GM12878 (cell line): ENCODE measurements at regions of chr7 and their contacts with region 1.

Region 1: DNA sequence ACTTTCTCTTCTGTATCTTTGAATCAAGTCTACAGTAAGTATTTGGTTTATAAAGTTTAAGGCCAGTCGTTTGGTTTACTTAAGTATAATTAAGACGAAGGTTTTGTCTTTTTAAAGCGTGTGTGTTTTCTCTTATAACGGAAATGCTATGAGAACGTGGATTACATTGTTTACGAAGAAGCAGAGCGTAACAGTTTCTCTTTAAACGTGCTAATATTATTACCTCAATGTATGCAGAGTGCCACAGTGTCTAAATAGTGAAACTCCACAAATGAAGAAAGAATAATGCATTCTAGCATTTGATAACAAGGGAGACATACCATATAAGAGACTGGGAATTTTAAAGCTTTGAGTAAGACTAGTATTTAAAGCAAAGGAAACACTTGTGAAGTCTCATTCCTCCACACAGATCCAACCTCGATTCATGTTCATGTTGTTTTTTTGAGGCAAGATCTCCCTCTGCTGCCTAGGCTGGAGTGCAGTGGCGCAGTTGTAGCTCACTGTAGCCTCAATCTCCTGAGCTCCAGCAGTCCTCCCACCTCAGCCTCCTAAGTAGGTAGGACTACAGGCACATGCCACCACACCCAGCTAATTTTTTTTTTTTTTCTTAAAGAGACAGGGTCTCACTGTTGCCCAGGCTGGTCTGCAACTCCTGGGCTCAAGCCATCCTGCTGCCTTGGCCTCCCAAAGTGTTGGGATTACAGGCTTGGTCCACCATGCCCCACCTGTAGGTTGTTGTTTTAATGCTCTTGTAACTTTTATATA is 75.1 kb downstream of the ANKRD61 start:
- DNase-seq: no peak
- ATAC-seq: peak; percentile 59
- H3K4me3 ChIP-seq: peak overlapping the region; percentile 93
- H3K27ac ChIP-seq: peak overlapping the region; percentile 66
- H3K4me1 ChIP-seq: 0 out of 2 replicates have a peak, but pooled peaks cover 3% of the 10 kb centered on the region
- H3K27me3 ChIP-seq: no peaks in the 10 kb centered on the region
- CTCF ChIP-seq: peak; percentile 21 to 51 (median 31); a peak in 4 of 6 replicates
- EP300 ChIP-seq: no peak
- POLR2A ChIP-seq: no peak
- RAD21 ChIP-seq: peak; percentile 32; the same call in 1 of the 2 replicates

Region 2: GRCh38 chr7:5854738-5855137 is 251.6 kb before region 1 on chr7:
- CTCF ChIA-PET with region 1: interaction called, 10 read pairs
- POLR2A ChIA-PET with region 1: no interaction called
- RAD21 ChIA-PET with region 1: interaction called, 8 read pairs
- SMC1A ChIA-PET with region 1: interaction called, 5 read pairs
- in situ Hi-C with region 1: no loop called
- intact Hi-C with region 1: no loop called
- DNase-seq: no peak
- ATAC-seq: no peak
- H3K4me3 ChIP-seq: no peak overlapping the region
- H3K27ac ChIP-seq: no peak overlapping the region
- H3K4me1 ChIP-seq: no peaks in the 10 kb centered on the region
- H3K27me3 ChIP-seq: no peaks in the 10 kb centered on the region
- CTCF ChIP-seq: no peak
- EP300 ChIP-seq: no peak
- POLR2A ChIP-seq: no peak
- RAD21 ChIP-seq: no peak

Region 3: DNA sequence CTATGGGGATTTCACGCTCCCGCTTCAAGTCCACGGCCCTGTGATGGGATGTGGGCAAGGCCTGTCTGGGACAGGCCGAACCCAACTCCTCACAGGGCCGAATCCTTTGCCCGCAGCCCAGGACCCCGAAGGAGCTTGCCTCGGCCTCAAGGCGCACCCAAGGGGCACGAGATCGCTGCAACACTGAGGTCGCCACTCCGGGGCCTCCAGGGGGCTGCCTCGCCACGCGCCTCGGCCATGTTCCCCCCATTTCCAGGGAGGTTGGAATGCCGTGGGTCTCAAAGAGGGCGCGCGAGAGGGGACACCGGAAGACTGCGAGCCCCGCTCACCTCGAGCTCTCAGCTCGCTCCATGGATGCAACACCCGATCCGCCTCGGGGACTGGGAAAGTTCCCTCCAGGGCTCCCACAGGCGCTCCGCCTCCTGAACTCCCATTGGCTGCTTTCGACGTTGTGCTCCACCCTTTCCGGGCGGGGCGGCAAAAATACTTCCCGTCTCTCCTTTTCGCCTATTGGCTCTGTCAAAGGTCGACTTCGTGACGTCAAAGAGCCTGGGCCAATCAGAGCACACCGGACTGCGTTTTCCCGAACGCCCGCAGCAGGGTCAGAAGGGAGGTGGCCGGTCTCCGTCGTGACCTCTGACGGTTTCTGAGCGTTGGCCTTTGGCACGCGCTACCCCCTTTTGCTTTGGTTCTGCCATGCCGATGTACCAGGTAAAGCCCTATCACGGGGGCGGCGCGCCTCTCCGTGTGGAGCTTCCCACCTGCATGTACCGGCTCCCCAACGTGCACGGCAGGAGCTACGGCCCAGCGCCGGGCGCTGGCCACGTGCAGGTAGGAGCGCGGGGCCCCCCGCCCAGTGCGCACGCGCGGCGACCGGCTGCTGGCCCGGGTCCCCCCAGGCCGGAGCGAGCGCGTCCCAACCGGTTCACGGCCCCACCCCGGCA is 97.4 kb before region 1 on chr7 and contains the starts of genes AIMP2 and PMS2:
- CTCF ChIA-PET with region 1: interaction called, 15 read pairs
- POLR2A ChIA-PET with region 1: no interaction called
- RAD21 ChIA-PET with region 1: interaction called, 13 read pairs
- SMC1A ChIA-PET with region 1: interaction called, 17 read pairs
- in situ Hi-C with region 1: no loop called
- intact Hi-C with region 1: loop called (anchors 2 kb)
- DNase-seq: peak; percentile 96
- ATAC-seq: peak; percentile 95
- H3K4me3 ChIP-seq: peak within 1 kb of the TSS; percentile 93
- H3K27ac ChIP-seq: peak within 1 kb of the TSS; percentile 89
- H3K4me1 ChIP-seq: 0 out of 2 replicates have a peak, but pooled peaks cover 2% of the 10 kb centered on the region
- H3K27me3 ChIP-seq: no peaks in the 10 kb centered on the region
- CTCF ChIP-seq: peak; percentile 8 to 23 (median 18); a peak in 2 of 6 replicates
- EP300 ChIP-seq: no peak
- POLR2A ChIP-seq: peak; percentile 86
- RAD21 ChIP-seq: no peak
- polyA plus RNA-seq, gene AIMP2: 55.6 to 80.0 TPM
- polyA plus RNA-seq, gene PMS2: 3.6 to 4.7 TPM

Region 4: DNA sequence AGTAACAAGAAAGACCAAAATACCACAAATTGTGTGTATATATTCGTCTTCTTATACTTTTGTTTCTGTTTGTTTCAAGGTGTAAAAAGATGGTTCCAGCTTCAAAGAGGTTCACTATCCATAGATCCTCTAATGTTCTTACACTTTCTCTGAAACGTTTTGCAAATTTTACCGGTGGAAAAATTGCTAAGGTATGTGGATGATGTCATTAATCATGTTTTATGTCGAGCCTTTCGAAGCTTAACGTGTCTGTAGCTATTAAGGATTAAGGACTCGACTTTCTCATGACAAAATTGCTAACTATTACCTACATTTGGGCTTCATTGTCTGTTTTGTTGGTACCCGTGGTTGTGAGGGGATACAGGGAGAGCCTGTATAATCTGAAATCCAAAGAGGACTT is 37.7 kb after region 1 on chr7:
- CTCF ChIA-PET with region 1: no interaction called
- POLR2A ChIA-PET with region 1: no interaction called
- RAD21 ChIA-PET with region 1: no interaction called
- SMC1A ChIA-PET with region 1: interaction called, 11 read pairs
- in situ Hi-C with region 1: no loop called
- intact Hi-C with region 1: no loop called
- DNase-seq: no peak
- ATAC-seq: no peak
- H3K4me3 ChIP-seq: no peak overlapping the region
- H3K27ac ChIP-seq: peak overlapping the region; percentile 25
- H3K4me1 ChIP-seq: peaks cover 4% of the 10 kb centered on the region
- H3K27me3 ChIP-seq: no peaks in the 10 kb centered on the region
- CTCF ChIP-seq: no peak
- EP300 ChIP-seq: no peak
- POLR2A ChIP-seq: no peak
- RAD21 ChIP-seq: no peak

Region 5: GRCh38 chr7:6272481-6273323 is 166.4 kb after region 1 on chr7 and contains the start of gene CYTH3:
- CTCF ChIA-PET with region 1: interaction called, 9 read pairs
- POLR2A ChIA-PET with region 1: interaction called, 3 read pairs
- RAD21 ChIA-PET with region 1: interaction called, 8 read pairs
- SMC1A ChIA-PET with region 1: interaction called, 11 read pairs
- in situ Hi-C with region 1: no loop called
- intact Hi-C with region 1: no loop called
- DNase-seq: no peak
- ATAC-seq: peak; percentile 86
- H3K4me3 ChIP-seq: peak within 1 kb of the TSS; percentile 67
- H3K27ac ChIP-seq: no peak within 1 kb of the TSS; the same call in 1 of the 2 replicates
- H3K4me1 ChIP-seq: peaks cover 6% of the 10 kb centered on the region; the same call in 1 of the 2 replicates
- H3K27me3 ChIP-seq: no peaks in the 10 kb centered on the region
- CTCF ChIP-seq: no peak
- EP300 ChIP-seq: no peak
- POLR2A ChIP-seq: peak; percentile 81
- RAD21 ChIP-seq: peak; percentile 3; the same call in 1 of the 2 replicates
- polyA plus RNA-seq, gene CYTH3: 0.45 to 1.4 TPM

Region 6: GRCh38 chr7:6350433-6351058 is 244.2 kb after region 1 on chr7:
- CTCF ChIA-PET with region 1: interaction called, 5 read pairs
- POLR2A ChIA-PET with region 1: interaction called, 3 read pairs
- RAD21 ChIA-PET with region 1: interaction called, 11 read pairs
- SMC1A ChIA-PET with region 1: interaction called, 8 read pairs
- in situ Hi-C with region 1: no loop called
- intact Hi-C with region 1: no loop called
- DNase-seq: no peak
- ATAC-seq: no peak
- H3K4me3 ChIP-seq: no peak overlapping the region
- H3K27ac ChIP-seq: no peak overlapping the region
- H3K4me1 ChIP-seq: peaks cover 10% of the 10 kb centered on the region; the same call in 1 of the 2 replicates
- H3K27me3 ChIP-seq: no peaks in the 10 kb centered on the region
- CTCF ChIP-seq: no peak
- EP300 ChIP-seq: no peak
- POLR2A ChIP-seq: no peak
- RAD21 ChIP-seq: no peak